ENCODE measurements at regions of chr2 and their contacts with region 1.

Region 1: DNA sequence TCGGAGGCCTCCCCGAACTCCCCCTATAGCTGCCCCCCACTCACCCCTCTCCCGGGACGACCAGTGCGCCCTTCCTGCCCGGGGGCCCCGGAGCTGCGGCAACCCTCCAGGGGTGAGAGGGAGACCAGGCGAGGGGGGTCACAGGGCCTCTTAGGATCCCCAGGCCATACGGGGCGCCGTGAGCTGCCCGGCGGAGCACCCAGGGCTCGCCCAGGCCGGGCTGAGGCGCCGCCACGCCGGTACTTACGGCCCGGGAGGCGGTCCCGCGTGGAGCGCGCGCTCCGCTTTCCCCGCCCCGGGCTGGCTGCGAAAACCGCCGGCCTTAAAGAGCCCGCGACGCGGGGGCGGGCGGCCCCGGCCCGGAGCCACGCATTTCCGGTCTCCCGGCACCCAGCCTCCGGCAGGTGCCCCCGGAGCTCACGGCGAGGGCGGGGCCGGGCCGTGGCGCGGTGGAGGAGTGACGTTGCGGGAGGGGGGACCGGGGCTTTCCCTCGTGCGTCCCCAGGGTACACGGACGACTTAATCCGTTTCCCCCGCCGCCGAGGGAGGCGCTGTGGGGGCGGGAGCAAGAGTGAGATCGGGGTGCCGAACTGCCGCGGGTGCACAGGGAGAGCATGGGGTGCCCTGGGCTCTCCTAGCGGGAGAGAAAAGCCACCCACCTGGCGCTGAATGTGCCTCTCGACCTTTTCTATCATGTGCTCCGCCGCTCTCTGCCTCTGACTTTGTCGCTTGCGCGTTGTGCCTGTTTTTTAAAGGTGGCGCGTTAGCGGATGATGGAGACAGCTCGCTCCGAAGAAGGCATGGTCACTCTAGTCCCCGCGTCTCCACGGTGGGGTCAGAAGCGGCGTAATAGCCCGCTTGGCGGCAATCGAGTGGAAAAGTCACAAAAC is at the start of gene METTL21A:
- DNase-seq: peak; percentile 93
- ATAC-seq: peak; percentile 80
- H3K4me3 Mint-ChIP-seq: peak within 1 kb of the TSS; percentile 90
- H3K27ac Mint-ChIP-seq: peak within 1 kb of the TSS; percentile 94
- H3K4me1 Mint-ChIP-seq: peaks cover 28% of the 10 kb centered on the region
- H3K27me3 Mint-ChIP-seq: no peaks in the 10 kb centered on the region
- total RNA-seq, gene METTL21A: 21.6 to 24.0 TPM

Region 2: GRCh38 chr2:207503234-207503633 is 122.0 kb before region 1 on chr2:
- POLR2A ChIA-PET with region 1: interaction called, 12 read pairs
- DNase-seq: no peak
- ATAC-seq: no peak
- H3K4me3 Mint-ChIP-seq: no peak overlapping the region
- H3K27ac Mint-ChIP-seq: no peak overlapping the region
- H3K4me1 Mint-ChIP-seq: peaks cover 67% of the 10 kb centered on the region
- H3K27me3 Mint-ChIP-seq: no peaks in the 10 kb centered on the region

Region 3: GRCh38 chr2:207529330-207530159 is 95.7 kb before region 1 on chr2 and contains the start of gene CREB1:
- POLR2A ChIA-PET with region 1: interaction called, 95 read pairs
- DNase-seq: peak; percentile 100
- ATAC-seq: peak; percentile 91
- H3K4me3 Mint-ChIP-seq: peak within 1 kb of the TSS; percentile 100
- H3K27ac Mint-ChIP-seq: peak within 1 kb of the TSS; percentile 100
- H3K4me1 Mint-ChIP-seq: peaks cover 41% of the 10 kb centered on the region
- H3K27me3 Mint-ChIP-seq: peaks cover 3% of the 10 kb centered on the region
- total RNA-seq, gene CREB1: 97.5 to 101 TPM

Region 4: DNA sequence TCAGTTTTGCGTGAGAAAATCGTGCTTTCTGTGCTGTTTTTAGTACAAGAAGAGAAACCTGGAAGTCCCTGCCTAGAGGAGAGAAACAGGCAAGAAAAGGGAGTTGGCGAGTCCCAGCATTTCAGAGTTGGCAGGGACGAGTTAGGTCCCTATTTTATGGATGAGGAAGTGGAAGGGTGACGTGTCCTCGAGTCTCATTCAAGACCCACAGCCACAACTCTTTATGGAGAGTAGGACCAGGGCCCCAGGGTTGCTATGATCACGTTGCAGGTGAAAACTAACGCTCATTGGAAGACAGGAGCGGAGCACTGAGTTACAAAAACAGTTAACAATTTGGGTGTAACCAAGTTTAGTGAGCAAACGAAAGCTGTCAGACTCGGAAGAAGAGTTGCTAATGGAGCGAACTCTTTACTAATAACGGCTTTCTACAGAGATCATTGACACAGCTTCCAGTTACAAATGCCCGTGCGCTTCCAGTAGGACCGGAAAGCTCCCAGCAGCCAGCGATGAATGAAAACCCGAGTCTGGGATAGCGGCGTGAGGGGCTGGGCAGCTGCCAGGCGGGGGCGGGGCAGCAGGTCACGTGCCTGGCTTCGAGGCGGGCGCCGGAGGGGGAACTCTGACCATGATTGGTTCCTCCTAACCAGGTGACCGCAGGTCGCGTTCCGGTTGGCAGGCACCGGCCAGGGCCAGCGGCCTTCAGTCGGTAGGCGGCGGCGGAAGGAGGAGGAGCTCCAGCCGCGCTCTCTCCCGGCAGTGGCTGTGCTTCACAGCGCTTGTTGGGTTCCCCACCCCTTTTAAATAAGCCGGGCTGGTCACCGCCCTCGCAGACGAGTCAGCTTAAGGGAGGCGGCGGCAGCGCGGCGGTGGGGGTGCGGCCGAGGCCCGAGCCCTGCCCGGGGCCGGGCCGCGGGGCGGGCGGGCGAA is 85.8 kb after region 1 on chr2 and contains the start of gene CCNYL1:
- POLR2A ChIA-PET with region 1: interaction called, 24 read pairs
- DNase-seq: peak; percentile 97
- ATAC-seq: peak; percentile 99
- H3K4me3 Mint-ChIP-seq: peak within 1 kb of the TSS; percentile 90
- H3K27ac Mint-ChIP-seq: peak within 1 kb of the TSS; percentile 86
- H3K4me1 Mint-ChIP-seq: peaks cover 17% of the 10 kb centered on the region
- H3K27me3 Mint-ChIP-seq: no peaks in the 10 kb centered on the region
- total RNA-seq, gene CCNYL1: 6.3 to 8.0 TPM